ENCODE measurements at regions of chr9 and their contacts with region 1.

Region 1: GRCh38 chr9:130682490-130683121 is 11.0 kb upstream of the EXOSC2 start:
- DNase-seq: peak; percentile 74 to 81
- ATAC-seq: peak; percentile 72 to 87 (median 83)
- H3K4me3 ChIP-seq: peak overlapping the region in 9 of 10 donors; percentile 50 to 75 (median 57)
- H3K27ac ChIP-seq: no peak overlapping the region
- H3K4me1 ChIP-seq: peaks cover 0 to 18% (median 14%) of the 10 kb centered on the region in 9 donors
- H3K27me3 ChIP-seq: peaks cover 0 to 31% (median 18%) of the 10 kb centered on the region in 7 donors
- CTCF ChIP-seq: peak; percentile 69 to 93 (median 87)

Region 2: GRCh38 chr9:130107234-130107861 is 575.3 kb before region 1 on chr9:
- intact Hi-C with region 1: loop called in 1 of 10 experiments (anchors 5 kb)
- DNase-seq: peak; percentile 75 to 85
- ATAC-seq: peak; percentile 69 to 88 (median 80)
- H3K4me3 ChIP-seq: no peak overlapping the region
- H3K27ac ChIP-seq: no peak overlapping the region
- H3K4me1 ChIP-seq: peaks cover 0 to 13% (median under 1%) of the 10 kb centered on the region in 9 donors
- H3K27me3 ChIP-seq: no peaks in the 10 kb centered on the region
- CTCF ChIP-seq: peak; percentile 59 to 86 (median 79)

Region 3: GRCh38 chr9:130461218-130461630 is 221.4 kb before region 1 on chr9:
- intact Hi-C with region 1: loop called (anchors 1 to 2 kb)
- DNase-seq: peak; percentile 48 to 69
- ATAC-seq: peak; percentile 36 to 75 (median 64)
- H3K4me3 ChIP-seq: no peak overlapping the region
- H3K27ac ChIP-seq: no peak overlapping the region
- H3K4me1 ChIP-seq: peaks cover 0 to 24% (median 11%) of the 10 kb centered on the region in 9 donors
- H3K27me3 ChIP-seq: peaks cover 0 to 4% (median 0%) of the 10 kb centered on the region in 7 donors
- CTCF ChIP-seq: peak; percentile 89 to 97 (median 94)

Region 4: GRCh38 chr9:130578865-130579737 is 103.5 kb before region 1 on chr9 and contains the start of gene FUBP3:
- intact Hi-C with region 1: loop called in 1 of 10 experiments (anchors 5 kb)
- DNase-seq: peak; percentile 94 to 96
- ATAC-seq: peak; percentile 95 to 99 (median 98)
- H3K4me3 ChIP-seq: peak within 1 kb of the TSS; percentile 73 to 100 (median 89)
- H3K27ac ChIP-seq: peak within 1 kb of the TSS; percentile 86 to 97 (median 96)
- H3K4me1 ChIP-seq: peaks cover 11 to 63% (median 45%) of the 10 kb centered on the region in 9 donors
- H3K27me3 ChIP-seq: no peaks in the 10 kb centered on the region
- CTCF ChIP-seq: no peak
- total RNA-seq, gene FUBP3: 20.5 to 40.3 (median 27.7) TPM

Region 5: GRCh38 chr9:130626249-130626992 is 56.2 kb before region 1 on chr9:
- intact Hi-C with region 1: loop called in 4 of 10 experiments (anchors 5 kb)
- DNase-seq: peak; percentile 43
- ATAC-seq: peak in 6 of 8 donors; percentile 28 to 59 (median 52)
- H3K4me3 ChIP-seq: no peak overlapping the region
- H3K27ac ChIP-seq: peak overlapping the region in 3 of 10 donors; percentile 7 to 31 (median 11)
- H3K4me1 ChIP-seq: peaks cover 3 to 49% (median 35%) of the 10 kb centered on the region in 9 donors
- H3K27me3 ChIP-seq: no peaks in the 10 kb centered on the region
- CTCF ChIP-seq: peak in 4 of 9 donors; percentile 17 to 43 (median 25)